ENCODE measurements at regions of chr20 and their contacts with region 1.

Region 1: DNA sequence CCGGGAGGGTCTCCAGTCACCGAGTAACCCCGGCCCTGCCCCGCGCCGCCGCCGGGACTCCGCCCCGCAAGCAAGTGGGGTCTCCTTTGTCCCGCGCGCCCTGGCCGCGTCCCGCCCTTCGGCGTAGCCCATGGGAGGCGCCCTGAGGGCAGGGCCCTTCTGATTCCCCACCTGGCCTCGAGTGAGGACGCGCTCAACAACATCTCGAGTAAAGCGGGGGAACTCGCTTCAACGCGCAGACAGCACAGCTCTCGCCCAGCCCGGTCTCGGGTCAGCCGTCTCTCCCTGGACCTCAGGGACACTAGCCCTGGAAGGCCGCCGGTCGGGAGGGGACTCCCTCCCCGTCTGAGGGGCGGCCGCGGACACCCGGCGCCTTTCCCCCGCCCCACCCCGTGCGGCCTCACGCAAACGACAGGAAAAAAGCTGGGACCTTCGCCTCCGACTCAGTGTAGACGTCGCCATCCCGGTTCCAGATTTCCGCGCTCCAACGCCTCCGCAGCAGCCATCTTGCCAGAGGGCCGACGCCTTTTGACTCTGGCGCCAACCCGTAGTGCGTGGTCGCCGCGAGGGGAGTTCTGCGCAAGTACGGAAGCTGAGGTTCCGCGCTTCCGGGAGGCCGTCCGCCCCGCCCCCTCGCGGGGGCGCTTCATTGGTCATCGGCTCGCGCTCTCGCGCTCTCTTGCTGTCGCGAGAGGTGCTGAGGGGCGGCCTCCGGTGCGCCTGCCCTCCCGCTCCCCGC is 412 bp upstream of the GID8 start:
- DNase-seq: peak; percentile 95
- H3K4me3 ChIP-seq: peak overlapping the region; percentile 97 to 99 (median 98)
- H3K27ac ChIP-seq: peak overlapping the region; percentile 65
- H3K4me1 ChIP-seq: peaks cover 6% of the 10 kb centered on the region
- H3K27me3 ChIP-seq: no peaks in the 10 kb centered on the region
- CTCF ChIP-seq: no peak
- POLR2A ChIP-seq: peak; percentile 82

Region 2: GRCh38 chr20:62953839-62954703 is 16.5 kb after region 1 on chr20:
- CTCF ChIA-PET with region 1: interaction called, 9 read pairs
- POLR2A ChIA-PET with region 1: no interaction called
- dilution Hi-C with region 1: no loop called
- intact Hi-C with region 1: loop called (anchors 1 kb)
- DNase-seq: peak; percentile 69
- H3K4me3 ChIP-seq: peak overlapping the region in 2 of 3 experiments; percentile 48 to 60
- H3K27ac ChIP-seq: peak overlapping the region; percentile 37
- H3K4me1 ChIP-seq: peaks cover 20% of the 10 kb centered on the region
- H3K27me3 ChIP-seq: no peaks in the 10 kb centered on the region
- CTCF ChIP-seq: no peak
- POLR2A ChIP-seq: peak; percentile 38